ENCODE measurements at regions of chr12 and their contacts with region 1.

Region 1: DNA sequence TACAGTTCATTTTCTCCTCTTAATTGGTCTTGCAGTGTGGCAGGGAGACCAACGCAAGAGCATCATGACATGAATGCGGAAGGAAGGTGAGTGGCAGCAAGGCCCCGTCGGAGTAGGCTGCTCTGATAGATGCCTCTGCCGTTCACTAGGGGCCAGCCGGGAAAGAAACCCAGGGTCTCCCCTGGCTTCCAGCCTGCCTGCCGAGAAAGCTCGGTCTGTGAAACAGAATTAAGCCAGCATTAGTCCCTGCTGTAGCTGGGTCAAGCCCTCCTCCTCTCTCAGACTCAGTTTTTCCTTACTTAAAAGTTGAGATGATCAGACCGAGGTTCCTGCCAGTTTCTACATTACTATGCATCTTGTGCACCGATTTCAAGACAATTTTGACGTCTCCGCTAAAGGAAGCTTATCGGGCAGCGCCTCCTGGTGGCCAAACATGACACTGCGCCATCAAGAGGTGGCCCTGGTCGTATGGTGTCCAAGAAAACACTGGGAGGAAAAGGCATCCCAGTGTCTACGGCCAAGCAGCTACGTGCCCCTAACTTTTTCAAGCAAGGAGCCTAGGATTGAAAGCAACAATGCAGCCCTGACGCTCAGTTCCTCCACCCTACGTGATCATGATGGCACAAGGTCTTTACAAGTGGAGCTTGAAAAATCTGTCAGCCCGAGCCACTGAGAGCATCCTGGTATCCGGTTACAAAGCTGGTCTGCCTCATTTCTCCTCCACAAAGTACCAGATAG is 131.6 kb downstream of the KSR2 start:
- DNase-seq: peak; percentile 60
- H3K4me3 ChIP-seq: no peak overlapping the region
- CTCF ChIP-seq: peak; percentile 98

Region 2: DNA sequence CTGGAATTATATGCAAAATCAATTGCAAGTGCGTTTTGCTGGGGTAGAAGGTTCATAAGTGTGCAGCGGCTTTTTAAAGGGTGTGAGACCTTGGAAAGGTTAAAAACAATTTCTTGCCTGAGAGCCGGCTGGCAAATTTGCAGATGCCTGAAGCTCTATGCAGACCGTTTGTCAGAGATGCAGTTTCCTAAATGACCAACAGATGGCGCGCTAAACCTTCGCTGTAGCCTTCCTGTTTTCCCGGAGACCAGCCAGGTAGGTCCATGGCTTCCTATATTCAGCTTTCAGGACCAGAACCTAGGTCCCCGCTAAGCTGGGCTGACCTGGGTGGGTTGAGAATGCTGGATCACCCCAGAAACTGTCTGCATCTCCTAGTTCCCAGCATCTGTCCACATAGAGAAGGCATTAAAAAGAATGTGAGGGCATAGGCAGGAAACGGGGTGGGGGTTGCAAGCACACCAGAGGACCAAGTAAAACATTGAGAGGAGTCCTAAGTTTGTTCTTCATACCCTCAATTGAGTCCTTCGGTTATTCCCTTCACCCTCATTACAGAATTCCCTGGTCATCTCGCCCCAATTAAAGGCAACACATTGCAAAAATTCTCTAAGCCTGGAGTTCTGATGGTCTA is 470.0 kb before region 1 on chr12:
- in situ Hi-C with region 1: loop called (anchors 25 kb)
- DNase-seq: peak; percentile 67
- H3K4me3 ChIP-seq: no peak overlapping the region
- CTCF ChIP-seq: peak; percentile 93

Region 3: DNA sequence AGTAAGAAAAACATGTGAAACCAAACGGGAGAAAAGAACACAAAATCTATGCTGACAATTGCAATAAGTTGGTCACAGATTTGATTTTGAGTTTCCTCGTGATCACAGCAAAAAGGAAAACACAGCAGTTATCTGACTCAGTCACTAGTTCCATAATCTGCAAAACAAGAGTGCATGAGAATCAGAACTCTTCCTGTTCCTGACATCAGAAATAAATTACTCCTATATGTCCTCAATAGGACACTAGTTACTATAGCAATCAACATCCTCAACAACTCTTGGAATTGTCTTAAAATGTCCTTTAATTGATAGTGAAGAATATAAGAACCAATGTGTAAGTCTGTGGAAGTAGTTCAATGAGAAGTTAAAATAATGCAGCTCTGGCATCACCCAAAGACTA is 207.7 kb before region 1 on chr12:
- in situ Hi-C with region 1: no loop called
- DNase-seq: no peak
- H3K4me3 ChIP-seq: no peak overlapping the region
- CTCF ChIP-seq: no peak

Region 4: DNA sequence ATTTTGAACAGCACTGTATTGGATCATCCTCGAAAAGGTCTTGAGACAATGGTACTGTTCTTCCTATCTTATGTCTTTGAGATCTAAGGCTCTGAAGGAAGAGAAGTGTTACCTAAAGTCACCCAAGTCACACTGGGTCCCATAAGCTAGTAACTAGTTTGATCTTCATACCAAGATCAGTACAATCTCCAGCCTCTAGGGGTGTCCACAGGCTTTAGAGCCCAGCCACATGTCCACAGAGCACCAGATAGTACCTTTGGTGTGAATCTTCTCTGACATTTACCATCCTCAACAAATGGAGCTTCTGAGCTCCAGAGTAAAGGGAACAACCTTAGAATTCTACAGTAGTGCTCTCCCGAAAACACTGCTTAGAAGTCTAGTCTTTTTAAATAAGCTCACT is 53.0 kb after region 1 on chr12:
- in situ Hi-C with region 1: loop called (anchors 10 kb)
- DNase-seq: no peak
- H3K4me3 ChIP-seq: no peak overlapping the region
- CTCF ChIP-seq: no peak